Psoas muscle (tissue), 8 donors: ENCODE measurements at regions of chr6 and their contacts with region 1.

Region 1: DNA sequence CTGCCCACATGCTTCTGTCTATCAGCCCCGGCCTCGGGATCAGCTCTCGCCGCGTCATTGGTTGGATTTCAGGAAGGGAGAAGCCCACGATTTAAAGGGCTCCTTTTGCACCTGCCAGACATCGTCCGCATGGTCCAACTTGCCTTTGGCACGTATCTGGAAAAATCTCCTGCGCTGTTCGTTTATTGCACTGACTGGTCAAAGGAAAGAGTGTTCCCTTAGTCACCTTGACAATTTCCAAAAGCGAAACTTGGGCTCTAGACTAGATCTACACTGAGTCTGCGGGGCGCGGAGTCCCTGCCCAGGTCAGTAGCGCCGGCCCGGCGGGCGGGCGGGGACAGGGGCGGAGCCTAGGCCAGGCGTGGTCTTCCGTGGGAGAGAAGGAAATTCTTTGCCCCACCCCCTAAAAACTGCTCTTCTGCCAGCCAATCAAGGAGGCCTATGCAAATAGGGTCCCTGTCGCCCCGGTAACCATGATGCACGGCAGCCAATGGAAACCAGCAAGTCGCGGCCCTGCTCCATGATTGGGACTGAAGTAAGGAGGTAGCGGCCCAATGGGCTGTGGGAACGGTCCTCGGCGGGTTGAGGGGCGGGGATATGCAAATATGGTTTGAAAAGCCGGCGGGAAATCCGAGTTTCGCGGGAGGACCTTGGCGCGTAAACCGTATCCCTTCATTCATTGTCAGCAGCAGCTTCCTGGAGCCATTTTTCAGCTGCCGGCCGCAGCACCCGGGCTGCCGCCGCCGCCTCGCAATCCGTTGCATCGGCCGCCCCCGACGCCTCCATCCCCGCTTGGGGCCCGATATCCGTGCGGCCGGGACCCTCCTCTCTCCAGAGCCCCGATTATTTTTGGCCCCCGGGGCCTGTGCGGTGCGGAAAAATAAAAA is at the start of gene E2F3:
- DNase-seq: peak; percentile 100
- ATAC-seq: peak; percentile 91 to 94 (median 92)
- H3K4me3 ChIP-seq: peak within 1 kb of the TSS; percentile 84
- H3K27ac ChIP-seq: peak within 1 kb of the TSS; percentile 93
- H3K4me1 ChIP-seq: peaks cover 9% of the 10 kb centered on the region
- H3K27me3 ChIP-seq: no peaks in the 10 kb centered on the region
- CTCF ChIP-seq: no peak
- total RNA-seq, gene E2F3: 8.8 to 16.8 (median 15.9) TPM

Region 2: GRCh38 chr6:20291764-20292580 is 109.5 kb before region 1 on chr6:
- intact Hi-C with region 1: loop called (anchors 5 kb)
- DNase-seq: peak; percentile 55 to 59
- ATAC-seq: peak; percentile 87 to 95 (median 90)
- H3K4me3 ChIP-seq: no peak overlapping the region
- H3K27ac ChIP-seq: no peak overlapping the region
- H3K4me1 ChIP-seq: no peaks in the 10 kb centered on the region
- H3K27me3 ChIP-seq: no peaks in the 10 kb centered on the region
- CTCF ChIP-seq: peak; percentile 96

Region 3: GRCh38 chr6:20340068-20340848 is 61.2 kb before region 1 on chr6:
- intact Hi-C with region 1: no loop called
- DNase-seq: no peak
- ATAC-seq: peak in 2 of 4 donors; percentile 34 to 46
- H3K4me3 ChIP-seq: no peak overlapping the region
- H3K27ac ChIP-seq: no peak overlapping the region
- H3K4me1 ChIP-seq: peaks cover 3% of the 10 kb centered on the region
- H3K27me3 ChIP-seq: no peaks in the 10 kb centered on the region
- CTCF ChIP-seq: no peak

Region 4: GRCh38 chr6:20620043-20620442 is 218.6 kb after region 1 on chr6:
- intact Hi-C with region 1: no loop called
- DNase-seq: no peak
- ATAC-seq: no peak
- H3K4me3 ChIP-seq: no peak overlapping the region
- H3K27ac ChIP-seq: no peak overlapping the region
- H3K4me1 ChIP-seq: peaks cover 22% of the 10 kb centered on the region
- H3K27me3 ChIP-seq: no peaks in the 10 kb centered on the region
- CTCF ChIP-seq: no peak